Prostate gland (tissue), 2 donors: ENCODE measurements at regions of chr1 and their contacts with region 1.

Region 1: GRCh38 chr1:153220606-153221303 is 3.4 kb downstream of the PRR9 start:
- DNase-seq: no peak
- H3K4me3 ChIP-seq: no peak overlapping the region
- H3K27ac ChIP-seq: no peak overlapping the region
- H3K4me1 ChIP-seq: no peaks in the 10 kb centered on the region
- H3K27me3 ChIP-seq: no peaks in the 10 kb centered on the region
- CTCF ChIP-seq: no peak
- POLR2A ChIP-seq: no peak

Region 2: GRCh38 chr1:152869808-152870419 is 350.8 kb before region 1 on chr1:
- intact Hi-C with region 1: loop called (anchors 2 kb)
- DNase-seq: peak; percentile 29
- H3K4me3 ChIP-seq: no peak overlapping the region
- H3K27ac ChIP-seq: no peak overlapping the region
- H3K4me1 ChIP-seq: no peaks in the 10 kb centered on the region
- H3K27me3 ChIP-seq: no peaks in the 10 kb centered on the region
- CTCF ChIP-seq: peak in 3 of 4 experiments; percentile 23 to 50 (median 35)
- POLR2A ChIP-seq: no peak